PC-3 (cell line): ENCODE measurements at regions of chr12 and their contacts with region 1.

Region 1: DNA sequence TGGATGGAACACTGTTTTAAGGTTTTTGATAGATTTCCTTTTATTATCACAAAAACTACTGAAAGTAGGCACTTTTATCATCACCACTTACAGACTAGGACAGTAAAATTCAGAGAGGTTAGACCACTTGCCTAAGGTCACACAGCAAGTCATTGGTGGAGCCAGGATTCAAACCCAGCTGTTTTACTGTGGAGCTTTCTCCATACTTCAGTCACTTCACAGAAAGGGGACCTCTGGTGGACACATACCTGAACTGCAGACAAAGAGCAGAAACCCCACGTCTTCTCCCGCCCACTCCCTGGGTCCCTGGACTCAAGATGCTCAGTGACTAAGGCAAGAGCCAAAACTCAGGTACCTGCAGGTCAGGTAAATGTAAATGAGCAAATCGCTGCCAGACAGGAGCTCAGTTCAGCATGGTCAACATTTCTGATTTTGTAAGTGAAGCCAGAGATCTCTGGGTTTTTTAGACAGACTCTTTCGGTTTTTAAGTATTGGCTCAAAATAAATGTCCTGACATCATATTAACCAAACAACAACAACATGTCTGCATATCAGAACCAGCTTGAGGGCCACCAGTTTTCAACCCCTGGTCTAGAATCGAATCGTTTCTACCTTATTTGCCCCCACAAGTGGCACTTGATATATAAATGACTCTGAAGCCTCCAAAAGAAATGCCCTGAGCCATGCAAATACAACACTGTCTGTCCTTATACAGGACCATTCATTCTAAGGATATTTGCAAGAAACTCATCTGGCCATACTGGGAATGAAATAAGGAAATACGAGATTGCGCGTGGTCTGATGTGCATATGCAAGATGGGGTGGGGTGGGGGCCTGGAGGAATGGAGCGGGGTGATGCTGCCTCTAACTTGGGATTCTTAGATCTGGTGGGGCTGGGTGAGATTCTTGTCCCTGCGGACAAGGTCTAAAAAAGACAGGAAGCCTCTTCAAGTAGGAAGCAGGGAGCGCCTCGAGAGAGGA is 110.9 kb downstream of the KSR2 start:
- DNase-seq: peak; percentile 88
- ATAC-seq: peak; percentile 27
- H3K4me3 ChIP-seq: no peak overlapping the region
- H3K27ac ChIP-seq: peak overlapping the region; percentile 61
- H3K4me1 ChIP-seq: peaks cover 40% of the 10 kb centered on the region
- H3K27me3 ChIP-seq: no peaks in the 10 kb centered on the region
- CTCF ChIP-seq: peak; percentile 88

Region 2: GRCh38 chr12:117890137-117890536 is 32.2 kb after region 1 on chr12:
- CTCF ChIA-PET with region 1: no interaction called
- POLR2A ChIA-PET with region 1: no interaction called
- intact Hi-C with region 1: no loop called
- DNase-seq: peak; percentile 29
- ATAC-seq: peak; percentile 71
- H3K4me3 ChIP-seq: no peak overlapping the region
- H3K27ac ChIP-seq: no peak overlapping the region
- H3K4me1 ChIP-seq: peaks cover 3% of the 10 kb centered on the region; the same call in 1 of the 2 replicates
- H3K27me3 ChIP-seq: no peaks in the 10 kb centered on the region
- CTCF ChIP-seq: peak; percentile 49

Region 3: GRCh38 chr12:117926391-117926899 is 68.5 kb after region 1 on chr12:
- CTCF ChIA-PET with region 1: no interaction called
- POLR2A ChIA-PET with region 1: no interaction called
- intact Hi-C with region 1: no loop called
- DNase-seq: no peak
- ATAC-seq: no peak
- H3K4me3 ChIP-seq: no peak overlapping the region
- H3K27ac ChIP-seq: no peak overlapping the region
- H3K4me1 ChIP-seq: no peaks in the 10 kb centered on the region
- H3K27me3 ChIP-seq: no peaks in the 10 kb centered on the region
- CTCF ChIP-seq: no peak

Region 4: DNA sequence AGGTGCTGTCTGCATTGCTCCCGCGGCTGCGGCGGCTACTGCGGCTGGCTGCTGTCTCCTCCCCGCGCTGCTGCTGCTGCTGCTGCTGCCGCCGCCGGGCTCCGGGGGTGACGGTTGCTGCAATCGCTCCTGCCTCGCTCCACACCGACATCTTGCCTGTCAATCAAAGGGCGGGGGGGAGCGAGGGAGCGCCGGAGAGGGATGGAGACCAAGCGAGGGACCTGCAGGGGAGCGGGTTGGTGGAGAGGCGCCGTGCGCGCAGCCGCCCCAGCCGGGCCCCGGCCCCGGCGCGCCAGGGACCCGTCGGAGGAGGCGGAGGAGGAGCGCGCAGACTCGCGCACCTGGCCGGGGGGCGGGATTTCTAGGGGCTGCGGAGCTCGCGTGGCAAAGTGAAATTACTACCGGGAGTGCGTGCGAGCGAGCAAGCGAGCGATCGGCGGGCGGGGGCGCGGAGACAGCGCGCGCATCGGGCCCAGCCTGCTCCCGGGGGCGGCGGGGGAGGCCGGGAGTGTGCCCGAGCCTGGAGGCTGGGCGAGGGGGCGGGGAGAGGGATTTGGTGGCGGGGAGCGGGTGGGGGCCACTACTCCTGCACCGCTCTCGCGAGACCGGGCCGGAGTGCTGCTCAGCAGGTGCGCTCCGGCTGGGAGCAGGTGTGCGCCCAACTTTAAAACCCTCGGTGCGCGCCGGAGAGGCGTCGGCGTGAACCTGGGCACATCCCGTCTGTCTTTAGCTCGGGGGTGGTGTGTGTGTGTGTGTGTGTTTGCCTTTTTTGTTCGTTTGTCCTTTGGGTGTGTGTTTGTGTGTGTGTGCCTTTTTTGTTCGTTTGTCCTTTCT is 111.1 kb after region 1 on chr12 and contains the start of gene KSR2:
- CTCF ChIA-PET with region 1: no interaction called
- POLR2A ChIA-PET with region 1: no interaction called
- intact Hi-C with region 1: loop called (anchors 5 kb)
- DNase-seq: peak; percentile 92
- ATAC-seq: peak; percentile 91
- H3K4me3 ChIP-seq: peak within 1 kb of the TSS; percentile 89
- H3K27ac ChIP-seq: peak within 1 kb of the TSS; percentile 68
- H3K4me1 ChIP-seq: peaks cover 24% of the 10 kb centered on the region
- H3K27me3 ChIP-seq: no peaks in the 10 kb centered on the region
- CTCF ChIP-seq: no peak
- total RNA-seq, gene KSR2: 0.80 and 2.8 TPM in 2 replicates